ENCODE measurements at regions of chr1 and their contacts with region 1.

Region 1: DNA sequence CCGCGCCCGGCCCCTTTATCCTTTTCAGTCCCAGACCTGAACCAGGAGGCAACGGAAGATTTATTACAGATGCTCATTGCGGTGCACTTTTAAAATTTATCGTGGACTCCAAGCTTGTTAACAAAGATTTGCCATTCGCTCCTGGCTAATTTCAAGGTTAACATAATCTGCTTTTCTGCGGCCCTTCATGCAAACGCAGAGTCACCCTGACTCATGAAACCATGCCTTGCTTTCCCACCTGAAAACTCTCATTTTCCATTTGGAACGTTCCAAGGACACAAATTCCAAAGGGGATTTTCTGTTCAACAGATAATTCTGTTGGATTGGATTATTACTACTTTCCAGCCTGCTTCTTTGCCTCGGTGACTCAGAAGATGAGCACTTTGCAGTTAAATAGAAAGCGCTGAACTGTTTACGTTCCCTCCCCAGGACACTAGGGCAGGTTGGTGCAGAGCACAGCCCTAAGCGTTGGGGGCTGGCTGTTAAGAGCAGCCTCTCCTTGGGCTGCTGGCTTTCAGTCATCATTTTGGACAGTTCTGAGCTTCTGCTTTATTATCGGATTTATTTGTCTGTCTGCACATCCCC is 51.1 kb downstream of the CD247 start:
- DNase-seq: no peak
- ATAC-seq: peak; percentile 79
- H3K4me3 Mint-ChIP-seq: no peak overlapping the region
- H3K27ac Mint-ChIP-seq: peak overlapping the region; percentile 62
- H3K4me1 Mint-ChIP-seq: peaks cover 86% of the 10 kb centered on the region
- H3K27me3 Mint-ChIP-seq: no peaks in the 10 kb centered on the region

Region 2: DNA sequence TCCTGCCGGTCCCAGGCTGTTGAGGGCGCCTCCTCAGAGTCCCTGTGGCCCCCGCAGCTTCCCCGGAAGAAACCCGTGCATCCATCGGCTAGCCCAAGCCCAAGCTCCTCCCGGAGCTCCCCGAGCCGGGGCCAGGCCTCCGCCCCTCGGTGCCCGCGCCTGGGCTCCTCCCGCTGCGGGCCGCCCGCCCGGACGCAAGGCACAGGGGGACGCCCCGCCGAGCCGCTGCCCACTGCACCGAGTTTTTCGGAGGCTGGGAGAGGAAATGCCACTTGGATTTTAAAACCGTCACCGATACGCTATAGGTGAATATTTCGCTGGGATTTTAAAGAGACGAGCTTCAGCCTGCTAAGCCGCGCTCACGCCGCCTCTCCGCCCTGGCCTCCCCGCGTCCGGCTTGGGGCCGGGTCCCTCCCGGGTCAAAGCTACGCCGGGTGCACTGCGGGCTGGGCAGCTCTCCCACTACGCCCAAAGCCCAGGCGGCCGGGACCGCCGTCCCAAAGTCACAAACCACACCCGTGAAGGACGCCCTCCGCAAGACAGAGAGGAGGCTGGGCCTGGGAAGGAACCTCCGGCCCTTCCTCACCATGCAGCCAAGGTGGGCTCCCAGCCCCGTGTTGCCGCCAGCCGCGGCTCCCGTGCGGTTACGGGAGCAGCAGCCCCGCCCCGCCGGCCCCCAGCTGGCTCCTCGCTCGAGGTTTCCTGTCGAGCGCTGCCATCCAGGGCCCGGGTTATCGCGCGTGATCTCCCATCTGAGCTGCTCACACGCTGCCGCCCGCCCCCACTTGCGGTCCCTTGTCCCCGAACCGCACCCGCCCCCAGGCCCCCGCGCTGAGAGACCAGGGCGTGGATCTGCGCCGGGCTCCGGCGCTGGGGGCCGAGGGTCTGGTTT is 12.1 kb before region 1 on chr1:
- CTCF ChIA-PET with region 1: interaction called, 21 read pairs
- POLR2A ChIA-PET with region 1: no interaction called
- intact Hi-C with region 1: no loop called
- DNase-seq: peak; percentile 88
- ATAC-seq: peak; percentile 58
- H3K4me3 Mint-ChIP-seq: peak overlapping the region; percentile 75
- H3K27ac Mint-ChIP-seq: peak overlapping the region; percentile 86
- H3K4me1 Mint-ChIP-seq: peaks cover 78% of the 10 kb centered on the region
- H3K27me3 Mint-ChIP-seq: no peaks in the 10 kb centered on the region

Region 3: GRCh38 chr1:167491586-167492461 is 24.6 kb after region 1 on chr1:
- CTCF ChIA-PET with region 1: interaction called, 11 read pairs
- POLR2A ChIA-PET with region 1: no interaction called
- intact Hi-C with region 1: no loop called
- DNase-seq: peak; percentile 66
- ATAC-seq: peak; percentile 41
- H3K4me3 Mint-ChIP-seq: peak overlapping the region; percentile 55
- H3K27ac Mint-ChIP-seq: peak overlapping the region; percentile 92
- H3K4me1 Mint-ChIP-seq: peaks cover 96% of the 10 kb centered on the region
- H3K27me3 Mint-ChIP-seq: no peaks in the 10 kb centered on the region

Region 4: DNA sequence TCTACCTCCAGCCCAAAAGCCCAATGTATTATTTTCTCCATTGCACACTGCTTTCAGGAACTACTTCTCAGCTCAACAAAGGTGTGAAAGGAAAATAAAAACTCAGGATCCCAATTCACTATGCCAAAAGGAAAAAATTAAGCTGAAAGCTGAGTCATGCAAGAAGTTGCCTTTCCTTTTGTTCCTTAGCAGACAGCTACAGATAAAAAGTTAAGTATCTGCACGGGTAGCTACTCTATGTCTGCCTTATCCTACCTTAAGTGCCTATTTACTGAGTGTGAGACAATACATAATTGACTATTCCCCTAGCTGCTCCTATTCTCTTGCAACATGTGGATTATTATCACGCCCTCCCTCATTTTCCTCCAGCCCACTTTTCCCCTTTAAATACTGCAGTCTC is 362.6 kb after region 1 on chr1:
- CTCF ChIA-PET with region 1: no interaction called
- POLR2A ChIA-PET with region 1: no interaction called
- intact Hi-C with region 1: no loop called
- DNase-seq: no peak
- ATAC-seq: no peak
- H3K4me3 Mint-ChIP-seq: no peak overlapping the region
- H3K27ac Mint-ChIP-seq: no peak overlapping the region
- H3K4me1 Mint-ChIP-seq: no peaks in the 10 kb centered on the region
- H3K27me3 Mint-ChIP-seq: no peaks in the 10 kb centered on the region

Measured in activated CD4-positive, alpha-beta T cell treated with anti-CD3 and anti-CD28 coated beads for 36 hours (primary cell).